CD4-positive, alpha-beta T cell (primary cell): ENCODE measurements at regions of chr11 and their contacts with region 1.

Region 1: GRCh38 chr11:32176223-32176934 is 85.5 kb downstream of the RCN1 start:
- DNase-seq: peak; percentile 46 to 86 (median 68)
- ATAC-seq: peak; percentile 60
- H3K4me3 ChIP-seq: no peak overlapping the region
- H3K4me3 Mint-ChIP-seq: no peak overlapping the region
- H3K27ac ChIP-seq: no peak overlapping the region
- H3K27ac Mint-ChIP-seq: no peak overlapping the region
- H3K4me1 ChIP-seq: no peaks in the 10 kb centered on the region
- H3K4me1 Mint-ChIP-seq: no peaks in the 10 kb centered on the region
- H3K27me3 ChIP-seq: no peaks in the 10 kb centered on the region
- H3K27me3 Mint-ChIP-seq: no peaks in the 10 kb centered on the region
- CTCF ChIP-seq: peak; percentile 92

Region 2: GRCh38 chr11:30346068-30346688 is 1830.2 kb before region 1 on chr11:
- CTCF ChIA-PET with region 1: no interaction called
- POLR2A ChIA-PET with region 1: no interaction called
- intact Hi-C with region 1: loop called in 1 of 2 experiments (anchors 5 kb)
- DNase-seq: peak in 3 of 14 experiments; percentile 66 to 73 (median 73)
- ATAC-seq: peak; percentile 61
- H3K4me3 ChIP-seq: no peak overlapping the region
- H3K4me3 Mint-ChIP-seq: no peak overlapping the region
- H3K27ac ChIP-seq: no peak overlapping the region
- H3K27ac Mint-ChIP-seq: no peak overlapping the region
- H3K4me1 ChIP-seq: no peaks in the 10 kb centered on the region
- H3K4me1 Mint-ChIP-seq: peaks cover 19% of the 10 kb centered on the region
- H3K27me3 ChIP-seq: no peaks in the 10 kb centered on the region
- H3K27me3 Mint-ChIP-seq: peaks cover 4% of the 10 kb centered on the region
- CTCF ChIP-seq: peak; percentile 66

Region 3: DNA sequence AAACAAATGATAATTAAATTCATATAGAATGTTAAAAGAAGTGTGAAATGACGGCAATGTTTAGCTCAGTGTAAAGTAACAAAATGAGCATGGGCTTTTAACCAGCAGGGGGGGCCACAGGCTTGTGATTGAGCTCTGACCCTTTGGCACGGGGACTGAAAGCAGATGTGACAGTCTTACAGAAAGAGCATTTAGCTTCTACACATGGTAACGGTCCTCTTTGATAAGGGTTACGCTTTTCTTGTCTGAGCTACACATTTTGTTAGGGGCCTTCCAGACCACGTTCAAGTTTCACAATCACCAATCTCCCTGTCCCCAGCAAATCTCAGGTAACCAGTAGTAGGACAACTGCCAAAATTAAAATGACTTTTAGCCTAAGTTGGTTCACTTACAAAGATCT is 1069.3 kb before region 1 on chr11:
- CTCF ChIA-PET with region 1: no interaction called
- POLR2A ChIA-PET with region 1: no interaction called
- intact Hi-C with region 1: loop called (anchors 5 kb)
- DNase-seq: peak; percentile 1 to 53 (median 16)
- ATAC-seq: no peak
- H3K4me3 ChIP-seq: no peak overlapping the region
- H3K4me3 Mint-ChIP-seq: no peak overlapping the region
- H3K27ac ChIP-seq: no peak overlapping the region
- H3K27ac Mint-ChIP-seq: no peak overlapping the region
- H3K4me1 ChIP-seq: no peaks in the 10 kb centered on the region
- H3K4me1 Mint-ChIP-seq: no peaks in the 10 kb centered on the region
- H3K27me3 ChIP-seq: no peaks in the 10 kb centered on the region
- H3K27me3 Mint-ChIP-seq: no peaks in the 10 kb centered on the region
- CTCF ChIP-seq: no peak

Region 4: DNA sequence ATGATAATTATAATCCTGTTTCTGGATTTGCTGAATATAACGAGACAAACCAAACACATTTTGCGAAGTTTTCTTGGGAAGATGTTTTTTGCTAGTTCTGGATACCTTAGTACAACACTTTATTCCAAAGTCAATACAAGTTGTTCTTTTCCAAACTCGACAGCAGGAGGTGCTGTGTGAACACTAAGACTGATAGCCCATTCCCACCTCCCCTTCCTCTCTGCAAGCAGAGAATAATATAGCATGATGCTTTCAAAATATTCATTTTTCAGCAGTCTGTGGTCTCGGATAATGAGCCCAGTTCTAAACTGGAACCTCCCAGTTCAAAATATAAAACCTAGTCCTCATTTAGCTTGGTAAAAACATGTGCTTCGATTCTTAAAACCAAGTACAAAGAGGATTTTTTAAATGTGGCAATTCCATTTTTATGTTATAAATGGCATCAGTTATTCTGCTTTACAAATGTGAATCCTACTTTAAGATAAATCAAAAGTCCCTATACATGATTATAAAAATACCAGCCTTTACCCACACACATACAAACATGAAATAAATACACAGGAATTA is 936.0 kb before region 1 on chr11:
- CTCF ChIA-PET with region 1: interaction called, 5 read pairs
- POLR2A ChIA-PET with region 1: no interaction called
- intact Hi-C with region 1: loop called in 1 of 2 experiments (anchors 1 kb)
- DNase-seq: peak in 7 of 14 experiments; percentile 0 to 59 (median 27)
- ATAC-seq: no peak
- H3K4me3 ChIP-seq: no peak overlapping the region
- H3K4me3 Mint-ChIP-seq: no peak overlapping the region
- H3K27ac ChIP-seq: no peak overlapping the region
- H3K27ac Mint-ChIP-seq: no peak overlapping the region
- H3K4me1 ChIP-seq: no peaks in the 10 kb centered on the region
- H3K4me1 Mint-ChIP-seq: no peaks in the 10 kb centered on the region
- H3K27me3 ChIP-seq: no peaks in the 10 kb centered on the region
- H3K27me3 Mint-ChIP-seq: peaks cover 5% of the 10 kb centered on the region
- CTCF ChIP-seq: peak; percentile 64

Region 5: GRCh38 chr11:31397239-31397834 is 779.0 kb before region 1 on chr11:
- CTCF ChIA-PET with region 1: no interaction called
- POLR2A ChIA-PET with region 1: no interaction called
- intact Hi-C with region 1: loop called in 1 of 2 experiments (anchors 2 kb)
- DNase-seq: peak in 3 of 14 experiments; percentile 33 to 45 (median 38)
- ATAC-seq: no peak
- H3K4me3 ChIP-seq: no peak overlapping the region
- H3K4me3 Mint-ChIP-seq: no peak overlapping the region
- H3K27ac ChIP-seq: no peak overlapping the region
- H3K27ac Mint-ChIP-seq: no peak overlapping the region
- H3K4me1 ChIP-seq: no peaks in the 10 kb centered on the region
- H3K4me1 Mint-ChIP-seq: no peaks in the 10 kb centered on the region
- H3K27me3 ChIP-seq: no peaks in the 10 kb centered on the region
- H3K27me3 Mint-ChIP-seq: no peaks in the 10 kb centered on the region
- CTCF ChIP-seq: peak; percentile 60

Region 6: GRCh38 chr11:31487848-31488247 is 688.5 kb before region 1 on chr11:
- CTCF ChIA-PET with region 1: no interaction called
- POLR2A ChIA-PET with region 1: no interaction called
- intact Hi-C with region 1: loop called (anchors 5 to 10 kb)
- DNase-seq: peak in 4 of 14 experiments; percentile 8 to 51 (median 36)
- ATAC-seq: no peak
- H3K4me3 ChIP-seq: no peak overlapping the region
- H3K4me3 Mint-ChIP-seq: no peak overlapping the region
- H3K27ac ChIP-seq: no peak overlapping the region
- H3K27ac Mint-ChIP-seq: no peak overlapping the region
- H3K4me1 ChIP-seq: no peaks in the 10 kb centered on the region
- H3K4me1 Mint-ChIP-seq: peaks cover 26% of the 10 kb centered on the region
- H3K27me3 ChIP-seq: no peaks in the 10 kb centered on the region
- H3K27me3 Mint-ChIP-seq: no peaks in the 10 kb centered on the region
- CTCF ChIP-seq: peak; percentile 25

Region 7: GRCh38 chr11:32052218-32052617 is 124.2 kb before region 1 on chr11:
- CTCF ChIA-PET with region 1: interaction called, 23 read pairs
- POLR2A ChIA-PET with region 1: no interaction called
- intact Hi-C with region 1: loop called (anchors 1 kb)
- DNase-seq: peak; percentile 8 to 72 (median 32)
- ATAC-seq: no peak
- H3K4me3 ChIP-seq: no peak overlapping the region
- H3K4me3 Mint-ChIP-seq: no peak overlapping the region
- H3K27ac ChIP-seq: no peak overlapping the region
- H3K27ac Mint-ChIP-seq: no peak overlapping the region
- H3K4me1 ChIP-seq: no peaks in the 10 kb centered on the region
- H3K4me1 Mint-ChIP-seq: no peaks in the 10 kb centered on the region
- H3K27me3 ChIP-seq: peaks cover 0 to 23% of the 10 kb centered on the region in 2 experiments
- H3K27me3 Mint-ChIP-seq: peaks cover 59% of the 10 kb centered on the region
- CTCF ChIP-seq: peak; percentile 93

Region 8: DNA sequence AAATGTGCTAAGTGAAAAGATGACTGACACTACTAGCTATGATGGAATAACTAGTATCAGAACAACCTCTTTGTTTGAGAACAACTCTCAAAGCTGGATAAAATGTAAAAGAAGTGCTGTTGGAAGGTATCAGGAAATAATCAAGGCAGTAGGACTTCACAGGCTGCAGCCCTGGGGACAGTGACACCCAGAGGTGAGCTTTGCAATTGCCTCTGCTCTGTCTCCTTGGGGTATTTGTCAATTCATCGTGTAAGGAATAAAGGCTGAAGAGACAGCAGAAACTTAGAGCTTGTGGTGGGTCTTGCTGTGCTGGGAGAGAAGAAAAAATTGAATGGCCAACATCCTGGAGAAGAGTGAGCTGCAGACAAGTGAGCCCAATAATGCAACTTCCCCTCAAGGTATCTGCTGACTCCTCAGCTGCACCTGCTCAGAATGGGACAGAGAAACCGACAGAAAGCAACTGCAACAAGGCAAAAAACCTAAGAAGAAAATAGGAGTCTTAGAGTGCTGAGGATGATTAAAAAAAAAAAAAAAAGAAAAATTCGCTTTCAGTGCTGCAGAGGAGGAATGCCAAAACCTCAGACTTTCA is 55.6 kb after region 1 on chr11:
- CTCF ChIA-PET with region 1: no interaction called
- POLR2A ChIA-PET with region 1: no interaction called
- intact Hi-C with region 1: no loop called
- DNase-seq: peak in 1 of 14 experiments; percentile 1
- ATAC-seq: no peak
- H3K4me3 ChIP-seq: no peak overlapping the region
- H3K4me3 Mint-ChIP-seq: no peak overlapping the region
- H3K27ac ChIP-seq: no peak overlapping the region
- H3K27ac Mint-ChIP-seq: no peak overlapping the region
- H3K4me1 ChIP-seq: no peaks in the 10 kb centered on the region
- H3K4me1 Mint-ChIP-seq: no peaks in the 10 kb centered on the region
- H3K27me3 ChIP-seq: peaks cover 0 to 6% of the 10 kb centered on the region in 2 experiments
- H3K27me3 Mint-ChIP-seq: peaks cover 21% of the 10 kb centered on the region
- CTCF ChIP-seq: no peak

Region 9: GRCh38 chr11:32279672-32280071 is 103.3 kb after region 1 on chr11:
- CTCF ChIA-PET with region 1: no interaction called
- POLR2A ChIA-PET with region 1: no interaction called
- intact Hi-C with region 1: no loop called
- DNase-seq: no peak
- ATAC-seq: no peak
- H3K4me3 ChIP-seq: no peak overlapping the region
- H3K4me3 Mint-ChIP-seq: no peak overlapping the region
- H3K27ac ChIP-seq: no peak overlapping the region
- H3K27ac Mint-ChIP-seq: no peak overlapping the region
- H3K4me1 ChIP-seq: no peaks in the 10 kb centered on the region
- H3K4me1 Mint-ChIP-seq: no peaks in the 10 kb centered on the region
- H3K27me3 ChIP-seq: peaks cover 0 to 4% of the 10 kb centered on the region in 2 experiments
- H3K27me3 Mint-ChIP-seq: peaks cover 44% of the 10 kb centered on the region
- CTCF ChIP-seq: no peak

Region 10: DNA sequence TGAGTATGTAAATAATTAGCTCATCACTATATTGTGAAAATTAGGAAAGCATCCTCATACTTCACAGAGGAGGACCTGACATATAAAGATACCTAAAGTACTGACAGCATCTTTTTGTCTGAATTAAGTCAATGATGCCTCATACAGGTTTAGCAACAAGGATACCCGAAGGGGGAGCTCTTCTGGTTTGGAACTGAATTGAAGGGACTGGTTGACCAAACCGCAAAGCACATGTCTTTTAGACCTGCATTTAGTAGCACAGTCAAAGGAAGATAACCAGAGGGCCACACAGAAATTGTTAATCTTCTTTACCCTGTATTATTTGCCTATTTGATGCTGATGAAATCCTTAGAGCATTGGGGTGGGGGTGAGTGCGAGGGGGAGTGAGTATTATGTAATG is 271.9 kb after region 1 on chr11:
- CTCF ChIA-PET with region 1: no interaction called
- POLR2A ChIA-PET with region 1: no interaction called
- intact Hi-C with region 1: no loop called
- DNase-seq: no peak
- ATAC-seq: no peak
- H3K4me3 ChIP-seq: no peak overlapping the region
- H3K4me3 Mint-ChIP-seq: no peak overlapping the region
- H3K27ac ChIP-seq: no peak overlapping the region
- H3K27ac Mint-ChIP-seq: no peak overlapping the region
- H3K4me1 ChIP-seq: no peaks in the 10 kb centered on the region
- H3K4me1 Mint-ChIP-seq: no peaks in the 10 kb centered on the region
- H3K27me3 ChIP-seq: peaks cover 0 to 18% of the 10 kb centered on the region in 2 experiments
- H3K27me3 Mint-ChIP-seq: peaks cover 37% of the 10 kb centered on the region
- CTCF ChIP-seq: no peak